ENCODE measurements at regions of chr5 and their contacts with region 1.

Region 1: GRCh38 chr5:107557051-107557658 is 113.6 kb downstream of the EFNA5 start:
- DNase-seq: no peak
- ATAC-seq: no peak
- H3K4me3 Mint-ChIP-seq: no peak overlapping the region
- H3K27ac Mint-ChIP-seq: no peak overlapping the region
- H3K4me1 Mint-ChIP-seq: no peaks in the 10 kb centered on the region
- H3K27me3 Mint-ChIP-seq: peaks cover 14% of the 10 kb centered on the region

Region 2: DNA sequence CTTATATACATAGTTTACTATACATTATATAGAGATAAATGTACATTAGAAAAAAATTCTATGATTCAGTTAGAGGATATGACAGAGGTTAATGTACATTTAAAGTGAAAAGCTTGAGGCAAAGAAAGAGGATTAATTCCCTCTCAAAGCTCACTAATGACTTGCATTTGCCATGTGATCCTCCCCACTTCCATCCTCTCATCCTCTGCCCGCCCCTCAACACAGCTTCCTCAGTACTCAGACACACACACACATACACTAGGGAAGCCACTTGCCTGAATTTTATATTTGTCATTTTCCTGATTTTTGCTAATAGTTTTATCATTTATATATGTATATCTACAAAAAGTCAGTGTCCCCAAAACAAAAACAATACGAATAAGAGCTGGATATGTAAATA is 651.0 kb before region 1 on chr5:
- CTCF ChIA-PET with region 1: no interaction called
- DNase-seq: no peak
- ATAC-seq: no peak
- H3K4me3 Mint-ChIP-seq: no peak overlapping the region
- H3K27ac Mint-ChIP-seq: no peak overlapping the region
- H3K4me1 Mint-ChIP-seq: no peaks in the 10 kb centered on the region
- H3K27me3 Mint-ChIP-seq: no peaks in the 10 kb centered on the region

Region 3: DNA sequence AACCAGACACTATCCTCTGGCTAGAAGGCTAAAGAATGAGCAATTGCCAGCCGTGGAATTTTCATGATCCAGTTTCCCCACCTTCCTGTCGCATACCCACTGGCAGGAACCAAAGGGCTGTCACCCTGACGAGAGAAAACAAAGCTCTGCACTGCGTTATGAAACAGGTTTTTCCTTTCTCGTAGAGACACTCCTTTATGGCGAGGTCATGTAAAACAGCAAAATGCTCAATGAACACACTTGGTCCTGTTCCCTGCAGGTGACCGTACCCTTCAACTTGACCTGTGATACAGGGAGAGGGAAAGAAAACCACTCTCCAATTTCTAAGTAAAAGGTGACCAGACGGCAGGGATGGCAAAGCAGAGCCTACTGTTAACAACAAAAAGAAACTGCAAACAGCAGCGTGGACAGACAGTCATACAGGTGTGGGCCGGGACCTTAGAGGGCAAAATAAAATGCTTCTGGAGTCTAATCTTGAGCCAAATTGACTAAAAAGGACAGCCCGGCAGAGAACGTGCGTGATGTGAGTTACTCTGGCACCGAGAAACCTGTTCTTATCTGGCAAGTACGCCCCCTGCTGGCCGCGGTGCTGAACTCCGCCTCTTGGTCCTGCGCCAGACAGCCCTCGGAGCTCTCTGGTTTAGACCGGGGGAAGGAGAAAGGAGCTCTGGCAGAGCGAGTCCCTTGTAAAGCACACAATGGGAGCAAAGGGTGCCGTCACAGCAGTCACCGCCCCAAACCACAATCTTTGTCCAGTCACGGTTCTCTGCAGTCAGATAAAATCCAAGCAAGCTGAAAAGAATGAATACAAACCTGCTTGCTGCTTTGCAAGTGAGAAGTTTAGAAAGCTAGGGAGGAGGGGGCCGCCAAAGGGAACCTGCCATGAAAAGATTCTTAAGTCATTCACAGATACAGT is 14.7 kb after region 1 on chr5:
- CTCF ChIA-PET with region 1: interaction called, 23 read pairs
- DNase-seq: peak; percentile 91
- ATAC-seq: peak; percentile 88
- H3K4me3 Mint-ChIP-seq: peak overlapping the region; percentile 67
- H3K27ac Mint-ChIP-seq: peak overlapping the region; percentile 20
- H3K4me1 Mint-ChIP-seq: peaks cover 19% of the 10 kb centered on the region
- H3K27me3 Mint-ChIP-seq: peaks cover 44% of the 10 kb centered on the region

Region 4: DNA sequence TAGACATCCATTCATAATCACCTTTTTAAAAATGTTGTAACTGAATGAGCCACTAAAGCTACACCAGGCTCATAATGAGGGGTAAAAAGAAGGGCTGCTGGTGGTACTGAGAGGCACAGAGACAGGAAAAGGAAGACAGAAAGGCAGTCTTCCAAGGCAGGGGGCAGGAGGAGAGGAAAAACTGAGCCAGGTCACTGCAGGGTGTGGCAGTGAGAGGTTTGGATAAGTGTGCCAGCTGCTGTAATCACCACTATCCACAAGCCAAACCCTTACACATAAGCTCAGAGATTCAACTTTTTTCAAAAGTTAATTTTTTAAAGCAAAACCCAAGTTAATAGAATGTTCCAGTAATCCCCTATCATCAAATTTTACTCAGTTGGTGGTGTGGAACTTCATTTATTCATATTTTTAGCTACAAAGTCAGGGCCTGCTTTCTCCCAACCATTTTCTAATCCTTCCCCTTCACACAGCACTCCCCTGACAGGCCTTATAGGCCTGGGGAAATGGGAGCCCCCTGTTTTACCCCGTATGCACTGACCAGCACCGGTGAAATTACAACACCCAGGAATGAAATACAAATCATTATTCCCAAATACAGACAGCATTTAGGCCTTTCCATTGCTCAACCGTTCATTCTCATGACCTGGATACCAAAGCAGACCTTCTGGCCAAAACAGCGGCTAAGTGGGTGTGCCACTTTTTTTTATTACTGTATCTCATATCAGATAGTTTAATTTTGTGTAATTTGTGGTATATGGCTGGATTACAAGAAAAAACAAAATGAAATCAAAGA is 37.3 kb after region 1 on chr5:
- CTCF ChIA-PET with region 1: no interaction called
- DNase-seq: no peak
- ATAC-seq: no peak
- H3K4me3 Mint-ChIP-seq: no peak overlapping the region
- H3K27ac Mint-ChIP-seq: no peak overlapping the region
- H3K4me1 Mint-ChIP-seq: no peaks in the 10 kb centered on the region
- H3K27me3 Mint-ChIP-seq: peaks cover 13% of the 10 kb centered on the region